ENCODE measurements at regions of chr2 and their contacts with region 1.

Region 1: GRCh38 chr2:218898109-218898878 is 17.6 kb downstream of the WNT10A start:
- DNase-seq: peak; percentile 70 to 80 (median 71)
- H3K4me3 ChIP-seq: peak overlapping the region in 1 of 2 donors; percentile 64
- H3K4me3 Mint-ChIP-seq: peak overlapping the region; percentile 81 to 97 (median 84)
- H3K27ac ChIP-seq: peak overlapping the region; percentile 93
- H3K27ac Mint-ChIP-seq: peak overlapping the region; percentile 85 to 99 (median 95)
- H3K4me1 ChIP-seq: peaks cover 54% of the 10 kb centered on the region
- H3K4me1 Mint-ChIP-seq: peaks cover 33 to 49% (median 42%) of the 10 kb centered on the region in 4 donors
- H3K27me3 ChIP-seq: no peaks in the 10 kb centered on the region
- H3K27me3 Mint-ChIP-seq: peaks cover 8 to 17% of the 10 kb centered on the region in 2 donors

Region 2: GRCh38 chr2:218710687-218711549 is 187.4 kb before region 1 on chr2 and contains the start of gene TTLL4:
- CTCF ChIA-PET with region 1: interaction called, 13 read pairs
- POLR2A ChIA-PET with region 1: interaction called, 10 read pairs
- intact Hi-C with region 1: loop called (anchors 1 kb)
- DNase-seq: peak; percentile 98 to 99 (median 99)
- H3K4me3 ChIP-seq: peak within 1 kb of the TSS; percentile 55 to 78
- H3K4me3 Mint-ChIP-seq: peak within 1 kb of the TSS; percentile 88 to 98 (median 95)
- H3K27ac ChIP-seq: peak within 1 kb of the TSS; percentile 81
- H3K27ac Mint-ChIP-seq: peak within 1 kb of the TSS; percentile 79 to 96 (median 93)
- H3K4me1 ChIP-seq: peaks cover 16% of the 10 kb centered on the region
- H3K4me1 Mint-ChIP-seq: peaks cover 14 to 26% (median 18%) of the 10 kb centered on the region in 4 donors
- H3K27me3 ChIP-seq: no peaks in the 10 kb centered on the region
- H3K27me3 Mint-ChIP-seq: peaks cover 0 to under 1% of the 10 kb centered on the region in 2 donors
- total RNA-seq, gene TTLL4: 23.1 to 26.1 TPM

Region 3: GRCh38 chr2:218861645-218862318 is 36.5 kb before region 1 on chr2:
- CTCF ChIA-PET with region 1: interaction called, 11 read pairs
- POLR2A ChIA-PET with region 1: interaction called, 3 read pairs
- intact Hi-C with region 1: no loop called
- DNase-seq: no peak
- H3K4me3 ChIP-seq: no peak overlapping the region
- H3K4me3 Mint-ChIP-seq: peak overlapping the region in 4 of 8 donors; percentile 14 to 74 (median 24)
- H3K27ac ChIP-seq: no peak overlapping the region
- H3K27ac Mint-ChIP-seq: no peak overlapping the region
- H3K4me1 ChIP-seq: peaks cover 22% of the 10 kb centered on the region
- H3K4me1 Mint-ChIP-seq: peaks cover 12 to 32% (median 17%) of the 10 kb centered on the region in 4 donors
- H3K27me3 ChIP-seq: peaks cover 36% of the 10 kb centered on the region
- H3K27me3 Mint-ChIP-seq: peaks cover 44 to 65% of the 10 kb centered on the region in 2 donors

Region 4: GRCh38 chr2:218870984-218871344 is 27.3 kb before region 1 on chr2:
- CTCF ChIA-PET with region 1: interaction called, 1,167 read pairs
- POLR2A ChIA-PET with region 1: interaction called, 667 read pairs
- intact Hi-C with region 1: loop called (anchors 1 kb)
- DNase-seq: peak in 1 of 5 donors; percentile 32
- H3K4me3 ChIP-seq: peak overlapping the region in 1 of 2 donors; percentile 41
- H3K4me3 Mint-ChIP-seq: peak overlapping the region; percentile 64 to 81 (median 74)
- H3K27ac ChIP-seq: no peak overlapping the region
- H3K27ac Mint-ChIP-seq: no peak overlapping the region
- H3K4me1 ChIP-seq: peaks cover 31% of the 10 kb centered on the region
- H3K4me1 Mint-ChIP-seq: peaks cover 13 to 44% (median 20%) of the 10 kb centered on the region in 4 donors
- H3K27me3 ChIP-seq: peaks cover 28% of the 10 kb centered on the region
- H3K27me3 Mint-ChIP-seq: peaks cover 35 to 56% of the 10 kb centered on the region in 2 donors

Region 5: GRCh38 chr2:218908721-218909619 is 10.7 kb after region 1 on chr2:
- CTCF ChIA-PET with region 1: interaction called, 31 read pairs
- POLR2A ChIA-PET with region 1: interaction called, 3 read pairs
- intact Hi-C with region 1: no loop called
- DNase-seq: peak; percentile 86 to 91 (median 87)
- H3K4me3 ChIP-seq: peak overlapping the region; percentile 64 to 68
- H3K4me3 Mint-ChIP-seq: peak overlapping the region; percentile 82 to 89 (median 87)
- H3K27ac ChIP-seq: peak overlapping the region; percentile 35
- H3K27ac Mint-ChIP-seq: peak overlapping the region; percentile 79 to 93 (median 84)
- H3K4me1 ChIP-seq: peaks cover 12% of the 10 kb centered on the region
- H3K4me1 Mint-ChIP-seq: peaks cover 1 to 22% (median 10%) of the 10 kb centered on the region in 4 donors
- H3K27me3 ChIP-seq: no peaks in the 10 kb centered on the region
- H3K27me3 Mint-ChIP-seq: peaks cover 7 to 15% of the 10 kb centered on the region in 2 donors

Region 6: GRCh38 chr2:219177552-219178376 is 279.5 kb after region 1 on chr2 and contains the start of gene RETREG2:
- CTCF ChIA-PET with region 1: no interaction called
- POLR2A ChIA-PET with region 1: interaction called, 6 read pairs
- intact Hi-C with region 1: loop called (anchors 5 kb)
- DNase-seq: peak; percentile 88 to 91 (median 88)
- H3K4me3 ChIP-seq: peak within 1 kb of the TSS; percentile 81 to 96
- H3K4me3 Mint-ChIP-seq: peak within 1 kb of the TSS; percentile 91 to 98 (median 95)
- H3K27ac ChIP-seq: peak within 1 kb of the TSS; percentile 91
- H3K27ac Mint-ChIP-seq: peak within 1 kb of the TSS; percentile 96 to 99 (median 98)
- H3K4me1 ChIP-seq: peaks cover 66% of the 10 kb centered on the region
- H3K4me1 Mint-ChIP-seq: peaks cover 34 to 79% (median 62%) of the 10 kb centered on the region in 4 donors
- H3K27me3 ChIP-seq: no peaks in the 10 kb centered on the region
- H3K27me3 Mint-ChIP-seq: no peaks in the 10 kb centered on the region
- total RNA-seq, gene RETREG2: 123 to 128 TPM

Measured in CD4-positive, alpha-beta memory T cell (primary cell).